ENCODE measurements at regions of chr2 and their contacts with region 1.

Region 1: DNA sequence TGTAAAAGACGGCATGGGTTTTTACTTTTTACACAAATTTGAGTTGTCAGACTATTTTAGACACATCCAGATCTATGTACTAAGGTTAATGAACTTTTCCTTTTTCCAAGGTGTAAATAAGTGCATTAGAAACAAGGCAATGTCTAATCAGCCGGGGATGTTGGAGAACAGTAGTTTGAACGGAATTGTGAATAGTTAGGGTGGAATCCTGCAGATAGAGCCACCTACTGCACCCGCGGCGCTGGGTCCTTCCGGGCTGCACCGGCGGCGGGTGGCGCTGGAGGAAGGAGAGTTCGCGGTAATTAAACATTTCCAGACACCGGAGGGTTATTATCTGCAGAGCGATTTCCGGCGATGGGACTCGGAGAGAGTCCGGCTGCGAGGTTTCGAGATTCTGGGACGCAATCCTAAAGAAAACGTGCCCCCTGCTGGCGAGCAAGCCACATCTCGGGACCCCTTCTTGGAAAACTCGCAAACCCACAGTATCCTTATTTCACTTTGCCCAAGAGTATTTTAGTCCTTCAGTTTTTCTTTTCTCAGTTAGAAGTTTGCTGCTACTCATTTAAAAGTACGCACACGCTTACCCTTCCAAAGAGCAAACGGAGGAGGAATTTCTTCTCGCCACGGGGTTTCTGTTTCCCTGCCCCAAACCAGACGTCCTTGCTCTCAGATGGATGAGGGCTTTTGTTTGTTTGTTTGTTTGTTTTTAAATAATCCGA is 4.5 kb upstream of the OSR1 start:
- DNase-seq: peak; percentile 86
- ATAC-seq: peak; percentile 57
- H3K4me3 ChIP-seq: peak overlapping the region; percentile 96
- H3K27ac ChIP-seq: peak overlapping the region; percentile 43; the same call in 1 of the 2 replicates
- H3K4me1 ChIP-seq: peaks cover 5% of the 10 kb centered on the region; the same call in 1 of the 2 replicates
- H3K27me3 ChIP-seq: peaks cover 11% of the 10 kb centered on the region
- CTCF ChIP-seq: peak; percentile 90
- POLR2A ChIP-seq: no peak
- RAD21 ChIP-seq: peak; percentile 92

Region 2: DNA sequence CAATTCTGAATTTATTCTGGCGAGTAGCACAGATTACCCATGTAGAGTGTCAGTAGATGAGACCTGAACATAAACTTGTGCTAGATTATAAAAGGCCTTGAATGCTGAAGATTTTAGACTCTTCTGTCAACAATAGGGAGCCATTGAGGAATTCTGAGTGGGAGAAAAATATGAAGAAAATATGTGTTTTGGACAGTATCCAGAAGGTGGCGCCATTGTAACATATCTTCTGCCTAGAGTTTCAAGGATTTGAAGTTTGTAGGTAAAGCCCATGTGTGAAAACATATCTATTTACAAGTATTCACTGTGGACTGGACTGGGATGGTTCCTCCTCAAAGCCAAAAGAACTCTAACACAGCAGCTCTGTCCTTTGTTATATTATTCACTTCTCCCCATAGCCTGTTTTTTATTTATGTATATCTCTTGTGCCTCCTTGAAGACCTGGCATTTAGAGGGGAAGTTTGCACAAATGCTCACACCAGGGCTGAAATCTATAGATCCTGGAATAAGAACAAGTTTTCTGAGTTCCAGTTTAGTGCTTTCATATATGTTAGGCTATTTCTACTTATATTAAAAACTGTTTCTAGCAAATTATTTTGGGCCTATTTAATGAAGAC is 927.4 kb before region 1 on chr2:
- CTCF ChIA-PET with region 1: no interaction called
- POLR2A ChIA-PET with region 1: no interaction called
- dilution Hi-C with region 1: no loop called
- in situ Hi-C with region 1: loop called (anchors 10 kb)
- intact Hi-C with region 1: loop called (anchors 1 kb)
- DNase-seq: peak; percentile 79
- ATAC-seq: peak; percentile 57
- H3K4me3 ChIP-seq: no peak overlapping the region
- H3K27ac ChIP-seq: no peak overlapping the region
- H3K4me1 ChIP-seq: peaks cover 12% of the 10 kb centered on the region
- H3K27me3 ChIP-seq: no peaks in the 10 kb centered on the region
- CTCF ChIP-seq: peak; percentile 75
- POLR2A ChIP-seq: 0 out of 2 replicates have a peak, but pooled peaks have one; percentile 28
- RAD21 ChIP-seq: peak; percentile 84

Region 3: DNA sequence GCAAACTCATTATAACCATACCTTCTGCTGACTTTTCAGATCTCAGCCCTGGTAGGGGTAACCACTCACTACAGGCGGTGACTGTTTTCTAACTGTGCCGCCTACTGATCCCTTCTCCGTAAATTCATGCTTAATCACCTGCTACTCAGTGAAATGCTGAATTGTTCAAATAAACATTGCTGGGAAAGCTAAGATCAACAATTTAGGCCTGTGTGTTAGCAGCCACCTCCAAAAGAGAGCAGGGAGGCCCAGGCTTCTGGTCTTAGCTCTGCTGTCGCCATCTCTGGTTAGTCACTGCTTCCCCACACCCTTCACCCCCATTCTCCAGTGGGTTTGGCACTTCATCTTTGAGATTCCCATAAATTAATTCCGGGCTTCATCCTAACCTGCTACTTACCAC is 751.7 kb before region 1 on chr2:
- CTCF ChIA-PET with region 1: no interaction called
- POLR2A ChIA-PET with region 1: no interaction called
- dilution Hi-C with region 1: no loop called
- in situ Hi-C with region 1: no loop called
- intact Hi-C with region 1: loop called (anchors 5 kb)
- DNase-seq: peak; percentile 90
- ATAC-seq: peak; percentile 89
- H3K4me3 ChIP-seq: no peak overlapping the region
- H3K27ac ChIP-seq: peak overlapping the region; percentile 19; the same call in 1 of the 2 replicates
- H3K4me1 ChIP-seq: peaks cover 6% of the 10 kb centered on the region
- H3K27me3 ChIP-seq: peaks cover 5% of the 10 kb centered on the region
- CTCF ChIP-seq: no peak
- POLR2A ChIP-seq: no peak
- RAD21 ChIP-seq: 0 out of 2 replicates have a peak, but pooled peaks have one; percentile 7

Region 4: GRCh38 chr2:18925296-18925695 is 437.6 kb before region 1 on chr2:
- CTCF ChIA-PET with region 1: no interaction called
- POLR2A ChIA-PET with region 1: no interaction called
- dilution Hi-C with region 1: no loop called
- in situ Hi-C with region 1: no loop called
- intact Hi-C with region 1: loop called (anchors 2 kb)
- DNase-seq: peak; percentile 94
- ATAC-seq: peak; percentile 94
- H3K4me3 ChIP-seq: no peak overlapping the region
- H3K27ac ChIP-seq: peak overlapping the region; percentile 47; the same call in 1 of the 2 replicates
- H3K4me1 ChIP-seq: peaks cover 16% of the 10 kb centered on the region
- H3K27me3 ChIP-seq: no peaks in the 10 kb centered on the region
- CTCF ChIP-seq: no peak
- POLR2A ChIP-seq: no peak
- RAD21 ChIP-seq: 0 out of 2 replicates have a peak, but pooled peaks have one; percentile 11

Region 5: DNA sequence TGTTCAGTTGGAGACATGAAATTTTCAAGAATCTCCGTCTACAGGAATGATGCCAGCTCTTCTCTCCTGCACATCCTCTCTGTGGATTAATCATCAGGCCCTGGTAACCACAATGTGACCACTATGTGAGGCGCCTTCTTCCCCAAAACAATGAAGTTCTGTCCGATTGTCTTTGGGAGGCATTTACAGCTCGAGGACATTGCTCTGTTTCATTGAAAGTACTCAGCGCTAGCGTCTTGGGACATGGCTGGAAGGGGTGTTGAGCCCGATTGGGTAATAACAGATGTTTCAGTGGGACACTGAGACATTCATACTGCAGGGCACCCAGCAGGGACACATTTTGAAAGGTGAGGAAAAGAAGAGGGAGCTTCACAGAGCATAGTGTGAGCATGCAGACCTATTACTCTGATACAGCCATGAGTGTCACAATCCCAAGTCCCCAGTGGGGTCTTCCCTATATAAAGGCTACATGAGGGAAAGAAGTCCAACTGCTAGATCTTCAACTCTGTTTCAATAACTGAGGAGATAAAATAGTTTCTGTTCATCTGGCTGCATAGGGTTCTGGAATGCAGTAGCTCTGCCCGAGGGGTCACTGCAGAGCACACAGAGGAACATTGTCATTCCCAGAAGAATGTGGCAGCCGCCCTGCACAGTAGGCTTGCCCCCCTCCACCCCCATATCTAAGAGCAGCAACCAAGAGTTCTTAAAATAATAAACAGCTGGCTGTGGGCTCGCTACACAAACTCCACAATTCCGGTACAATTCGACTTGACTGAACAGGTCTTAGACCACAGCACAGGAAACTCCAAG is 241.8 kb before region 1 on chr2:
- CTCF ChIA-PET with region 1: interaction called, 3 read pairs
- POLR2A ChIA-PET with region 1: no interaction called
- dilution Hi-C with region 1: no loop called
- in situ Hi-C with region 1: loop called (anchors 10 kb)
- intact Hi-C with region 1: loop called (anchors 5 kb)
- DNase-seq: peak; percentile 87
- ATAC-seq: peak; percentile 88
- H3K4me3 ChIP-seq: no peak overlapping the region
- H3K27ac ChIP-seq: peak overlapping the region; percentile 54
- H3K4me1 ChIP-seq: peaks cover 22% of the 10 kb centered on the region
- H3K27me3 ChIP-seq: no peaks in the 10 kb centered on the region
- CTCF ChIP-seq: no peak
- POLR2A ChIP-seq: no peak
- RAD21 ChIP-seq: peak; percentile 36; the same call in 1 of the 2 replicates

Region 6: GRCh38 chr2:19176955-19177354 is 186.0 kb before region 1 on chr2:
- CTCF ChIA-PET with region 1: no interaction called
- POLR2A ChIA-PET with region 1: no interaction called
- dilution Hi-C with region 1: no loop called
- in situ Hi-C with region 1: no loop called
- intact Hi-C with region 1: no loop called
- DNase-seq: peak; percentile 89
- ATAC-seq: peak; percentile 75
- H3K4me3 ChIP-seq: no peak overlapping the region
- H3K27ac ChIP-seq: no peak overlapping the region
- H3K4me1 ChIP-seq: peaks cover 14% of the 10 kb centered on the region
- H3K27me3 ChIP-seq: no peaks in the 10 kb centered on the region
- CTCF ChIP-seq: no peak
- POLR2A ChIP-seq: no peak
- RAD21 ChIP-seq: no peak

Region 7: DNA sequence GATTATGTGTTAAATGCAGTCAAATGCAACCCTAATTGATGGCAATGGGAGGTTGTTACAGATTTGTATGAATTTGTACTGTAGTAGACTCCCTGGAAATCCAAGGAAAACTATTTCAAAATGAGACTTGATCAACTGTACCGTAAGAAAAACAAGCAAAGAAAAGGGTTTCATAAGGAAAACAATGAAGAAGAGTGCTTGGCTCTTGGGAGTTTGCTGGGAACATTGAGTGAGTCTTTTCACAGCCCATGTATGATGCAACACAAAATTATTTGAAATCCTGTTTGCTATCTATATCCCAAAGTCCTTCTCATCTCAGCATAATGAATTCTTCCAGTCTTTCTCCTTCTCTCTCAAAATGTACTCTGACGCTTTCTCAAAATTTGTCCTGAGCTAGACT is 62.5 kb after region 1 on chr2:
- CTCF ChIA-PET with region 1: no interaction called
- POLR2A ChIA-PET with region 1: no interaction called
- dilution Hi-C with region 1: no loop called
- in situ Hi-C with region 1: no loop called
- intact Hi-C with region 1: no loop called
- DNase-seq: no peak
- ATAC-seq: no peak
- H3K4me3 ChIP-seq: no peak overlapping the region
- H3K27ac ChIP-seq: no peak overlapping the region
- H3K4me1 ChIP-seq: no peaks in the 10 kb centered on the region
- H3K27me3 ChIP-seq: peaks cover 2% of the 10 kb centered on the region
- CTCF ChIP-seq: no peak
- POLR2A ChIP-seq: no peak
- RAD21 ChIP-seq: no peak

Region 8: DNA sequence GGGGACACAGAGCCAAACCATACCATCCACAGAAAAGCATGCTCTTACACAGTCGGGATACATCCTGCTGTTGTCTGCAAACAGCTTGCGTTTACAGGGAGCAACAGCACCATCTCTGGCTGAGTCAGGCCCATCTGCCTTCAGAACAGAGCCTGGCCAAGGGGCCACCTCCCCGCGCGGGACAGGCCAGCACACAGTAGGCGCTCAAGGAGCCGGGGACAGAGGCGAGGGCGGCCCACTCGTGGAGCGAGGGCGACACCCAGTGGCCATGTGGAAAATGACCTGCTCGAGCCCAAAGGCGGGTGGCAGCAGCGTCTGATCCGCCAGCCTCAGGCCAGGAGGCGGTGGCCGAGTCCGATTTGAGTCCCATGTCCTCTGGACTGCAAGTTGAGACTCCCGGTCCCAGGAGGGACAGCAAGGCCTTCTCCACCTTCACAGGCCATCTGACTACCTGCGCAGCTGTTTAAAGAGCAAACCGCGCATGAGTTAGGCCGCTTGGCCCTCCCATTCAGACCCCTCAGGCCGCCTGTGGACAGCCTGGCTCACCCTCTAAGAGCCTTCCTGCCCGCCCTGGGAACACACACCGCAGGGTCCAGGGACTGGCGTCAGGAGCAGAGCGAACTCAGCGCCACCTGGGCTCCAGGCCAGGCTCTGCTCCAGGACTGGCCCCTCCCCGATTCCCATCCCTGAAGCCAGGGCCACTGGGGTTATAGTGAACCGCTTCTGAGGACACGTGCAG is 500.6 kb after region 1 on chr2:
- CTCF ChIA-PET with region 1: no interaction called
- POLR2A ChIA-PET with region 1: no interaction called
- dilution Hi-C with region 1: no loop called
- in situ Hi-C with region 1: loop called (anchors 5 kb)
- intact Hi-C with region 1: loop called (anchors 1 kb)
- DNase-seq: peak; percentile 45
- ATAC-seq: peak; percentile 76
- H3K4me3 ChIP-seq: no peak overlapping the region
- H3K27ac ChIP-seq: no peak overlapping the region
- H3K4me1 ChIP-seq: peaks cover 14% of the 10 kb centered on the region
- H3K27me3 ChIP-seq: peaks cover 3% of the 10 kb centered on the region
- CTCF ChIP-seq: peak; percentile 83
- POLR2A ChIP-seq: no peak
- RAD21 ChIP-seq: peak; percentile 98